MCF 10A (cell line): ENCODE measurements at regions of chr5 and their contacts with region 1.

Region 1: DNA sequence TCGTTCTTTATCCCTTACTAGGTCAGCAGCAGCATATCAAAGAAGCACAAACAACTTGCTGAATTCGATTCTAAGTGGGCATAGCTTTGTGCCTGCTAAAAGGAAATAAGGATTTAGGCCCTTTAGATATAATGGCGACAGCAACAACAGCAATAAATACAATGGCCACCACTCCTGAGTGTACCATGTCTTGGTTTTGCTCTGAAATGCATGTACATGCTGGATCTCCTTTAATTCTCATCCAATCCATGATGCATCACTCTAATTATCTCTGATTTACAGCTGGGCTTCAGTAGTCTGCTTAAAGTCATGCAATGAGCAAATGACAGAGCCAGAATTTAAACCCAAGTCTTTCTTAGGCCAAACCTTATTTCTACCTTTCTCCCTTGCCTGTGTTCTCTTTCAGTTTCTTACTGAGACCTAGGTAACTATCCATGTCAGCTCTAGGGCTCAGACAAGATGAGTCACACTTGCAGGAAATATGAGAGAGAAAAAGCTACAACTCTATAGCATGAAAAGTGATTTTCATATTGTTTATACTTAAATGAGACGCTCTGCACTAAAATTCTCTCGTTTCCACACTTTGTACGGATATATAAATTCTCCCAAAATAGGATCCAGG is 111.8 kb downstream of the HMHB1 start:
- DNase-seq: peak; percentile 78
- H3K4me3 Mint-ChIP-seq: peak overlapping the region; percentile 1
- H3K27ac Mint-ChIP-seq: peak overlapping the region; percentile 69
- H3K4me1 Mint-ChIP-seq: peaks cover 39% of the 10 kb centered on the region
- H3K27me3 Mint-ChIP-seq: no peaks in the 10 kb centered on the region
- CTCF ChIP-seq: no peak

Region 2: GRCh38 chr5:143791848-143792731 is 131.7 kb before region 1 on chr5:
- CTCF ChIA-PET with region 1: no interaction called
- POLR2A ChIA-PET with region 1: no interaction called
- intact Hi-C with region 1: no loop called
- DNase-seq: no peak
- H3K4me3 Mint-ChIP-seq: no peak overlapping the region
- H3K27ac Mint-ChIP-seq: no peak overlapping the region
- H3K4me1 Mint-ChIP-seq: no peaks in the 10 kb centered on the region
- H3K27me3 Mint-ChIP-seq: no peaks in the 10 kb centered on the region
- CTCF ChIP-seq: no peak

Region 3: DNA sequence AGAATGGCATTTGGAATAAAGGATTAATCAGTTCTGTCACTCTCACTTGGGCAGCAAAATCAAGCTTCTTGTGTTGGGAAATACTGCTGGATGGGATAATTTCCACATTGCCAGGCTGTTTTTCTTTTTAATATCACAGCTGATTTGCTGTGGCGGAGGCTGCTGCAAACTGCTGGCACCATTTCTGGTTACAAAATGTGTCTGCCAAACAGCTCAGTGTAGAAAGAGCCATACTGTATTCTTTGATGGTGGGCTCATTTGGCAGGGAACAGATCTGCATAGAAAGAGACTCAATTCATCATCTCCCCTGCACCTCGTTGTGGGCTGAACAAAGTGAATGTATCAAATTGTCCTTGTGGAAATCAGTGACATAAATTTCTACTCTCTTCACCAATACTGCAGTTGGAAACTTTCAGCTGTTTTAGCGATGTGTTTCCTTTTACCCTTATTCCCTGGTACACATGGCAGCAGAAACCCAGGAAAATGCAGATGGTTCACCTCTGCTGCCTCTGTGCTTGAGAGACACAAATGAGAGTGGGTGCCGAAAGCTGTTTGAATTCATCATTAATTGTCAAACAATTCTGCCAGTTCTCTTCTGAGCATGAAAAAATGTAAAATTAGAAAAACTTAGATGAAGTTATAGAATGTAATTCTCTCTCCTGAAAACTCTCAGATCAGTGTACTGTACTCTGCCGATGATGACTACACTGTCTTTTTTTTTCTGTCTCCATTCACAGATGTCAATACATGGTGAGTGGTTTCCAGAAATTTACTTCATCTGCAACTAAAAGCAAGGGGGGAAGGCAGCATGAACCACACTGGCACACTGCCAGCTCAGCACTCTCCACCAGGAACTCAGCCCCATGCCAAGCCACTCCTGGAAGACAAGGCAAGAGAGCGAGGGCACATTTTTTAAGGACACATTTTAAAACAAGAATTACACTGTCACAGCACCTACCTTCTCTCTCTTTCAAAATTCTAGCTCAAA is 36.8 kb before region 1 on chr5:
- CTCF ChIA-PET with region 1: interaction called, 3 read pairs
- POLR2A ChIA-PET with region 1: interaction called, 52 read pairs
- intact Hi-C with region 1: loop called (anchors 2 kb)
- DNase-seq: peak; percentile 68
- H3K4me3 Mint-ChIP-seq: peak overlapping the region; percentile 5
- H3K27ac Mint-ChIP-seq: peak overlapping the region; percentile 62
- H3K4me1 Mint-ChIP-seq: peaks cover 51% of the 10 kb centered on the region
- H3K27me3 Mint-ChIP-seq: no peaks in the 10 kb centered on the region
- CTCF ChIP-seq: no peak

Region 4: GRCh38 chr5:143896966-143897365 is 26.8 kb before region 1 on chr5:
- CTCF ChIA-PET with region 1: interaction called, 3 read pairs
- POLR2A ChIA-PET with region 1: interaction called, 52 read pairs
- intact Hi-C with region 1: no loop called
- DNase-seq: peak; percentile 35
- H3K4me3 Mint-ChIP-seq: no peak overlapping the region
- H3K27ac Mint-ChIP-seq: no peak overlapping the region
- H3K4me1 Mint-ChIP-seq: no peaks in the 10 kb centered on the region
- H3K27me3 Mint-ChIP-seq: no peaks in the 10 kb centered on the region
- CTCF ChIP-seq: no peak

Region 5: GRCh38 chr5:144260121-144260520 is 336.4 kb after region 1 on chr5:
- CTCF ChIA-PET with region 1: no interaction called
- POLR2A ChIA-PET with region 1: no interaction called
- intact Hi-C with region 1: no loop called
- DNase-seq: no peak
- H3K4me3 Mint-ChIP-seq: no peak overlapping the region
- H3K27ac Mint-ChIP-seq: no peak overlapping the region
- H3K4me1 Mint-ChIP-seq: no peaks in the 10 kb centered on the region
- H3K27me3 Mint-ChIP-seq: no peaks in the 10 kb centered on the region
- CTCF ChIP-seq: no peak